CD4-positive, alpha-beta memory T cell (primary cell): ENCODE measurements at regions of chr2 and their contacts with region 1.

Region 1: DNA sequence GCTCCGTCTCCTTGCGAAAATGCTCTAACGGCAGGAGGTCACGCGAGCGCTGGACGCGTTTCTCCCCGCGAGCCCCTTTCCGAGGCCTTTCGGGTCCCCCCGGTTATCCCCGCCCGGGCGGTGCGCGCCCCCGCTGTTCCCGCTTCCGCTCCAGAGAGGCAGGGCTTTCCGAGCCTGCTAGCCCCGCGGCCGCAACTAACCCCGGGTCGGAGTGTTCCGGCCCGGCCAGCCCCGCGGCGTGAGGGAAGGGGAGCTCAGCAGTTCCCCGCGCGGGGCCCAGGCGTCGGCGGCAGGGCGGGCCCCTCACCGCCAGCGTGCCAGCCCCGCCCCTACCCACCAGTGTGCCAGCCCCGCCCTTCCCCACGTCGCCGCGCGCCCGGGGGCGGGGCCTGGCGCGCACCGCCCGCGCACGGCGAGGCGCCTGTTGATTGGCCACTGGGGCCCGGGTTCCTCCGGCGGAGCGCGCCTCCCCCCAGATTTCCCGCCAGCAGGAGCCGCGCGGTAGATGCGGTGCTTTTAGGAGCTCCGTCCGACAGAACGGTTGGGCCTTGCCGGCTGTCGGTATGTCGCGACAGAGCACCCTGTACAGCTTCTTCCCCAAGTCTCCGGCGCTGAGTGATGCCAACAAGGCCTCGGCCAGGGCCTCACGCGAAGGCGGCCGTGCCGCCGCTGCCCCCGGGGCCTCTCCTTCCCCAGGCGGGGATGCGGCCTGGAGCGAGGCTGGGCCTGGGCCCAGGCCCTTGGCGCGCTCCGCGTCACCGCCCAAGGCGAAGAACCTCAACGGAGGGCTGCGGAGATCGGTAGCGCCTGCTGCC is at the start of gene MSH6:
- DNase-seq: peak; percentile 87 to 93 (median 92)
- H3K4me3 ChIP-seq: peak within 1 kb of the TSS; percentile 78 to 99
- H3K4me3 Mint-ChIP-seq: peak within 1 kb of the TSS; percentile 90 to 94 (median 92)
- H3K27ac ChIP-seq: peak within 1 kb of the TSS; percentile 94
- H3K27ac Mint-ChIP-seq: peak within 1 kb of the TSS; percentile 84 to 94 (median 92)
- H3K4me1 ChIP-seq: peaks cover 36% of the 10 kb centered on the region
- H3K4me1 Mint-ChIP-seq: peaks cover 13 to 33% (median 23%) of the 10 kb centered on the region in 4 donors
- H3K27me3 ChIP-seq: no peaks in the 10 kb centered on the region
- H3K27me3 Mint-ChIP-seq: no peaks in the 10 kb centered on the region
- total RNA-seq, gene MSH6: 39.4 to 49.9 TPM

Region 2: GRCh38 chr2:47402805-47403608 is 379.9 kb before region 1 on chr2 and contains the start of gene MSH2:
- CTCF ChIA-PET with region 1: no interaction called
- POLR2A ChIA-PET with region 1: interaction called, 5 read pairs
- intact Hi-C with region 1: loop called (anchors 1 kb)
- DNase-seq: peak; percentile 89 to 91 (median 90)
- H3K4me3 ChIP-seq: peak within 1 kb of the TSS; percentile 71 to 80
- H3K4me3 Mint-ChIP-seq: peak within 1 kb of the TSS; percentile 97 to 99 (median 98)
- H3K27ac ChIP-seq: peak within 1 kb of the TSS; percentile 66
- H3K27ac Mint-ChIP-seq: peak within 1 kb of the TSS; percentile 83 to 96 (median 94)
- H3K4me1 ChIP-seq: peaks cover 27% of the 10 kb centered on the region
- H3K4me1 Mint-ChIP-seq: peaks cover 27 to 47% (median 35%) of the 10 kb centered on the region in 4 donors
- H3K27me3 ChIP-seq: no peaks in the 10 kb centered on the region
- H3K27me3 Mint-ChIP-seq: no peaks in the 10 kb centered on the region
- total RNA-seq, gene MSH2: 26.2 to 26.4 TPM

Region 3: GRCh38 chr2:47724221-47724981 is 58.5 kb before region 1 on chr2:
- CTCF ChIA-PET with region 1: no interaction called
- POLR2A ChIA-PET with region 1: no interaction called
- intact Hi-C with region 1: no loop called
- DNase-seq: no peak
- H3K4me3 ChIP-seq: no peak overlapping the region
- H3K4me3 Mint-ChIP-seq: no peak overlapping the region
- H3K27ac ChIP-seq: no peak overlapping the region
- H3K27ac Mint-ChIP-seq: no peak overlapping the region
- H3K4me1 ChIP-seq: no peaks in the 10 kb centered on the region
- H3K4me1 Mint-ChIP-seq: no peaks in the 10 kb centered on the region
- H3K27me3 ChIP-seq: no peaks in the 10 kb centered on the region
- H3K27me3 Mint-ChIP-seq: no peaks in the 10 kb centered on the region

Region 4: GRCh38 chr2:47803363-47803762 is 20.5 kb after region 1 on chr2:
- CTCF ChIA-PET with region 1: no interaction called
- POLR2A ChIA-PET with region 1: no interaction called
- intact Hi-C with region 1: no loop called
- DNase-seq: no peak
- H3K4me3 ChIP-seq: no peak overlapping the region
- H3K4me3 Mint-ChIP-seq: no peak overlapping the region
- H3K27ac ChIP-seq: no peak overlapping the region
- H3K27ac Mint-ChIP-seq: peak overlapping the region in 3 of 7 donors; percentile 10 to 54 (median 52)
- H3K4me1 ChIP-seq: no peaks in the 10 kb centered on the region
- H3K4me1 Mint-ChIP-seq: peaks cover 3 to 8% (median 4%) of the 10 kb centered on the region in 4 donors
- H3K27me3 ChIP-seq: no peaks in the 10 kb centered on the region
- H3K27me3 Mint-ChIP-seq: no peaks in the 10 kb centered on the region

Region 5: DNA sequence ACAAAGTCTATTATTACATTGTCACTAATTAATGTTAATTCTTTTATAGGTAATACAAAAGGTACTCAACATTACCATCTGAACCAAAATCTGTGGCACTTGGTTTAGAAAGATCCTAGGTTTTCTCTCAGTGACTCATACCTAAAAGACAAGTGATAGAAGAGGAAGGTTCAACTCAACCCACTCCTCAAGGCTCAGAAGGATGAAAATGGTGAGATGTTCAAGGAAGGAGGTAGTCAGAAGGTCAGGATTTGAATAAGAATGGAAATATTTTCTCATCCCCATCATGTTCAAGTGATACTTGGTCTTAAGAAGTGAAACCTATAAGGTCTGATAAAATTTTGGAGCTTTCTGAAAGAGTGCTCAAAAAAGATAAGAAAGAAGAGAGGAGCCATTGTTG is 209.8 kb after region 1 on chr2:
- CTCF ChIA-PET with region 1: no interaction called
- POLR2A ChIA-PET with region 1: no interaction called
- intact Hi-C with region 1: no loop called
- DNase-seq: no peak
- H3K4me3 ChIP-seq: no peak overlapping the region
- H3K4me3 Mint-ChIP-seq: no peak overlapping the region
- H3K27ac ChIP-seq: no peak overlapping the region
- H3K27ac Mint-ChIP-seq: no peak overlapping the region
- H3K4me1 ChIP-seq: no peaks in the 10 kb centered on the region
- H3K4me1 Mint-ChIP-seq: no peaks in the 10 kb centered on the region
- H3K27me3 ChIP-seq: peaks cover 3% of the 10 kb centered on the region
- H3K27me3 Mint-ChIP-seq: peaks cover 0 to 1% of the 10 kb centered on the region in 2 donors